Dendritic cell treated with granulocyte-macrophage colony-stimulating factor and Interleukin-4, amounts not matched to agents 40 ng/mL and 50 ng/mL, for 4 days (primary cell): ENCODE measurements at regions of chr3 and their contacts with region 1.

Region 1: GRCh38 chr3:47380601-47381316 is at the start of gene PTPN23:
- H3K4me3 Mint-ChIP-seq: peak within 1 kb of the TSS; percentile 86
- H3K27ac Mint-ChIP-seq: peak within 1 kb of the TSS; percentile 98
- H3K4me1 Mint-ChIP-seq: peaks cover 72% of the 10 kb centered on the region
- H3K27me3 Mint-ChIP-seq: no peaks in the 10 kb centered on the region

Region 2: DNA sequence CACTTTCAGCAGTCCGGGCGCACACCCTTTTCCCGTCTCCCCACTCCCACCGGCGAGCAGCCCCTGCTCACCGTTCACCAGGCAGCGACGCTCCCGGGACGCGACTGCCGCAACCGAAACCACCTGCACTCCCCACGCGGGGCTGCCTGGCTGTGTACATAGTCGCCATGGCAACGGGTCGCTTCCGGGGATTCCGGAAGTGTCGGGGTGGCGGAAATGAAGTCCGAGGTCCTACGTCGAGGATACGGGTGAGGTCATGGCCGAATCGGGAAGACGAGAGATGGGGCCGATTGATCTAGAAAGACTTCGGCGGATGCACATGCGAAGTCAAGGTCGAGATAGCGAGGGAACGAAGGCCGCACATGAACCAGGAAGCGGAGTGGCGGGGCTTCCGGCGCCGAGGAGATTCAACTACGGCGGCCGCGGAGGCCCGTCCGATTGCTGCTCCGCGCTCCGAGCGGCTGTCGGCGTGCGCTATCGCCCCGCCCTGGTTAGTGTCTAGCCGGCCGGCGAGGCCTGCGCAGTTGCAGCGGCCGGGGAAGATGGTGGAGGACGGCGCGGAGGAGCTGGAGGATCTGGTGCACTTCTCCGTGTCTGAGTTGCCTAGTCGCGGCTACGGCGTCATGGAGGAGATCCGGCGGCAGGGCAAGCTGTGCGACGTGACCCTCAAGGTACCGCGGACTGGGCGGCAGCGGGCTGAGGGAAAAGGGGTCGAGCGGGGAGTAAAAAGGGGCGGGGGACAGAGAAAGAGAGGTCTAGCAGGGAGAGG is 98.2 kb before region 1 on chr3 and contains the starts of genes KIF9 and KLHL18:
- intact Hi-C with region 1: loop called (anchors 2 kb)
- H3K4me3 Mint-ChIP-seq: peak within 1 kb of the TSS; percentile 98
- H3K27ac Mint-ChIP-seq: peak within 1 kb of the TSS; percentile 93
- H3K4me1 Mint-ChIP-seq: peaks cover 55% of the 10 kb centered on the region
- H3K27me3 Mint-ChIP-seq: no peaks in the 10 kb centered on the region

Region 3: GRCh38 chr3:47347217-47347801 is 33.5 kb before region 1 on chr3:
- intact Hi-C with region 1: loop called (anchors 2 kb)
- H3K4me3 Mint-ChIP-seq: peak overlapping the region; percentile 11
- H3K27ac Mint-ChIP-seq: no peak overlapping the region
- H3K4me1 Mint-ChIP-seq: peaks cover 39% of the 10 kb centered on the region
- H3K27me3 Mint-ChIP-seq: peaks cover 4% of the 10 kb centered on the region

Region 4: GRCh38 chr3:47692158-47692557 is 311.4 kb after region 1 on chr3:
- intact Hi-C with region 1: no loop called
- H3K4me3 Mint-ChIP-seq: no peak overlapping the region
- H3K27ac Mint-ChIP-seq: no peak overlapping the region
- H3K4me1 Mint-ChIP-seq: no peaks in the 10 kb centered on the region
- H3K27me3 Mint-ChIP-seq: no peaks in the 10 kb centered on the region

Region 5: DNA sequence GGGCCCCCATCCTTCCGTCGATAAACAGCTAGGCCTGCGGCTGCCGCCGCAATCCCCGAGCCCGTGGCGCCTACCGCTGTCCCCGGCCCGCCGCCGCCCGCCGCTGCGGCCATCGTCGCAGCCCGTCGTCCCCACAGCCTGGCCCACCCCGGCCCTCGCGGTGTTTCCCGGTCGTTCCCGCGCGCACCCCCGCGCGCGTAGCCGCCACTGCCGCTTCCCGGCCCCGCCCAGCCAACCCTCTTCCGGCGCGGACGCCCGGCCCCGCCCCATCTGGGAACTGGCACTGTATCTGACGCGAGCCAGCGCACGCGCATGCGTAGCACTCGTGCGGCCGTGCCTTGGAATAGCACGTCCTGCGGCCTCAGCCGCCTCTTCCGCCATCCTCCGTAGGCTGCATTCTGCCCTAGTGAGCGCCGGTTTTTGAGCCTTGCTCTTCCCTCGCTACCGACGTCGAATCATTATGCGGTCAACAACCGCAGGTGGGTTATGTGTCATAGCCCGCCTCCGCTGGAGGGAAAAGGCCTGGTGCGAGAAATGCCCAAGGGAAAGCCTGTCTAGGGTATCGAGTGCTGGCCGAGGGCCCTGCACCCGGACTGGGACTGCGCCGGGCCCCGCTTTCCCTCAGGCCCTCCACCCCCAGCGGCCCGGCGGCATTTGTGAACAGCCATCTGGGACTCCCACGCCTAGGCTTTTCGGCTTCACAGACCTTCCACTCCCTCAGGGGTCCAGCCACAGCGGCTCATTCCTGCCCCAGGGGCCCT is 401.1 kb after region 1 on chr3 and contains the start of gene SMARCC1:
- intact Hi-C with region 1: loop called (anchors 10 kb)
- H3K4me3 Mint-ChIP-seq: peak within 1 kb of the TSS; percentile 92
- H3K27ac Mint-ChIP-seq: peak within 1 kb of the TSS; percentile 95
- H3K4me1 Mint-ChIP-seq: peaks cover 5% of the 10 kb centered on the region
- H3K27me3 Mint-ChIP-seq: no peaks in the 10 kb centered on the region